Ovary (tissue), 10 donors: ENCODE measurements at regions of chr2 and their contacts with region 1.

Region 1: GRCh38 chr2:149155196-149155969 is 116.9 kb downstream of the LYPD6B start:
- DNase-seq: no peak
- H3K4me3 ChIP-seq: no peak overlapping the region
- H3K27ac ChIP-seq: no peak overlapping the region
- H3K4me1 ChIP-seq: no peaks in the 10 kb centered on the region
- H3K27me3 ChIP-seq: no peaks in the 10 kb centered on the region
- CTCF ChIP-seq: no peak
- EP300 ChIP-seq: no peak
- POLR2A ChIP-seq: no peak

Region 2: DNA sequence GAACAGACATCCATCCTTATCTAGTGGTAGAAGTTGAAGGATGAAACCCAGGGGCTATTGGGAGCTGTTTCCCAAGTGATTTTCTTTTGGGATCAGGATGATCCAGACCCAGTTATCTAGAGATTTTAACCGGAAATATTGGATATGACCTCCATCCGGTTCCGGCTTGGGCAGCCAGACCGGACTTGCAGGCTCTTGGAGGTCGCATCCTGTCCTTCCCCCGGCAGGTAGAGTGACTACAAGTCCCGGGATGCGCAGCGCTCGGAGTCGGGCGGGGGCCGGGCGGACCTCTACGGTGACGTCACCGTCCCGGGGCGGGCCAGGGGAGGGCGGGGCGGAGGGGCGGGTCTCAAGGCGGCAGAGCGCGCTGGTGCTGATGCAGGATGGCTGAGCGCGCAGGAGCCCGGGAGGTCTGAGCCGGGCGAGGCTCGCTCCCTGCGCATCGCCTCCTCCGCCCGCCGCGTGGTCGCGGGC is 280.5 kb before region 1 on chr2 and contains the start of gene KIF5C:
- intact Hi-C with region 1: loop called in 1 of 4 experiments (anchors 5 kb)
- DNase-seq: peak; percentile 56 to 84 (median 76)
- H3K4me3 ChIP-seq: peak within 1 kb of the TSS; percentile 20
- H3K27ac ChIP-seq: no peak within 1 kb of the TSS
- H3K4me1 ChIP-seq: no peaks in the 10 kb centered on the region
- H3K27me3 ChIP-seq: no peaks in the 10 kb centered on the region
- CTCF ChIP-seq: no peak
- EP300 ChIP-seq: no peak
- POLR2A ChIP-seq: no peak
- total RNA-seq, gene KIF5C: 0.73 to 18.7 (median 4.3) TPM